ENCODE measurements at regions of chr3 and their contacts with region 1.

Region 1: GRCh38 chr3:66998113-66998903 is at the start of gene KBTBD8:
- DNase-seq: peak; percentile 97
- H3K4me3 Mint-ChIP-seq: peak within 1 kb of the TSS; percentile 95
- H3K27ac Mint-ChIP-seq: peak within 1 kb of the TSS; percentile 88
- H3K4me1 Mint-ChIP-seq: peaks cover 36% of the 10 kb centered on the region
- H3K27me3 Mint-ChIP-seq: peaks cover 10% of the 10 kb centered on the region
- total RNA-seq, gene KBTBD8: 18.3 and 26.6 TPM in 2 replicates

Region 2: DNA sequence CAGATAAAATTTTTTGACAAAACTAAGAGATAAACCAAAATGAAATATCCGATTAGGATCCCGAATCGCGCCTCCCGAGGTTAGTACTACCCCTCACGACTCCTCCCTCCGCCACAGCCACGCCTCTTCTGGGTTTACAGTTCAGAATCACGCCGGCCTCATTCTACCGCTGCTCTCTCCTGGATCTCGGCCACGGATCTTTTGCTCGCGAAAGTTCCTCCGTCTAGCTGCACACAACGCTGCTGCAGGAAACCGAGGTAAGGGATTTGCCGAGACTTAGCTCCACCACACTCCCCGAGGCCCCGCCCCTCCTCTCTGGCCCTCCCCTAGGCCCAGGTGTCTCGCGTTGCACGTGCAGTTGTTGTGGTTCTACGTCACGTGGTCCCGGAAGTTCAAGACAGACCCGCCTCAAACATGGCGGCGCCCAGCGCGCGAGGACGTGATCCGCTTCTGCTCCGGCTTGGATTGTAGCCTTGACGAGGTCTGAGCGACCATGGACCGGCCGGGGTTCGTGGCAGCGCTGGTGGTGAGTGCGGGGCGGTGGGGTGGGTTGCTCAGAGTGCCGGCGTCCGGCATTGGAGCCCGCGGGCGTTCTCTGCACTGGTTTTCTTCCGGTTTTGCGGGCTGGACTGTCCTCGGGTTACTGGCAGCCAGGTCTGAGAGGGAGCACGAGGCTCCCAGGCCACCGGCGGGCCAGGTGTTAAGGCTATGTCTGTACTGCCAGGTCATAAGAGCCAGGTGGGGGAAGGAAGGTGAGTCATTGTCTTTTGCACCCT is 777.5 kb before region 1 on chr3 and contains the start of gene SLC25A26:
- intact Hi-C with region 1: loop called (anchors 1 kb)
- DNase-seq: peak; percentile 97
- H3K4me3 Mint-ChIP-seq: peak within 1 kb of the TSS; percentile 98
- H3K27ac Mint-ChIP-seq: peak within 1 kb of the TSS; percentile 85
- H3K4me1 Mint-ChIP-seq: peaks cover 41% of the 10 kb centered on the region
- H3K27me3 Mint-ChIP-seq: peaks cover 2% of the 10 kb centered on the region
- total RNA-seq, gene SLC25A26: 17.0 and 18.8 TPM in 2 replicates

Region 3: GRCh38 chr3:66302288-66302687 is 696.0 kb before region 1 on chr3:
- intact Hi-C with region 1: loop called (anchors 1 kb)
- DNase-seq: peak; percentile 37
- H3K4me3 Mint-ChIP-seq: peak overlapping the region; percentile 32
- H3K27ac Mint-ChIP-seq: peak overlapping the region; percentile 91
- H3K4me1 Mint-ChIP-seq: peaks cover 65% of the 10 kb centered on the region
- H3K27me3 Mint-ChIP-seq: no peaks in the 10 kb centered on the region

Region 4: DNA sequence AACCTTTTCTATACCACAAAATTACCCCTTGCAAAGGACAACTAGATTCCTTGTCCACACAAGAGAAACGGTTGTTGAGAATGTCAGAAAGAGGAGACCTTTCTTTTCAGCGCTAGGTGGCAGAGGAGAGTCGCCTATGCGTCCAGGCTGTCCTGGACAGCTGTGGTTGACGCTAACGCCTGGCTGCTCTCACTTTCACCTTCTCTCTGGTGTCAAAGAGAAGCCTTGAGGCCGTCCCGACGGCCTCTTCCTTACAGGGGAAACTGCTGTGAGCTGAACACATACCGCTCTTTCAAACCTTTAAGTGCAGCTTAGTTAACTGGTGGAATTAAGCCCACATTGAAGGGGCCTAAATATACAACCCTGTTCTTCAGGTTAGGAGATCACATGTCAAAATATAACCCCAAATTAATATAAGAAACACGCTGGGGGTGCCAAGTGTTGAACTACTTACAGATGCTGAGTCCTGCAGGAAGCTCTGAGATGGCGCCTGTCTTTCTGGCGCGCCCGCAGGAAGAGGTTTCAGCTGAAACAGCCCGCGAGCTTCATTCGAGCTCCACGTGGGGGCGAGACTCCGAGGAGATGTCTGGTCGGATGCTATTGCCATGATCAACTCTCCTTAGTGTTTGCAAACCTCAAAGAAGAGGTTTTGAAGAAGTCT is 26.3 kb before region 1 on chr3:
- intact Hi-C with region 1: loop called (anchors 1 kb)
- DNase-seq: peak; percentile 46
- H3K4me3 Mint-ChIP-seq: peak overlapping the region; percentile 68
- H3K27ac Mint-ChIP-seq: no peak overlapping the region
- H3K4me1 Mint-ChIP-seq: peaks cover 13% of the 10 kb centered on the region
- H3K27me3 Mint-ChIP-seq: peaks cover 24% of the 10 kb centered on the region

Region 5: DNA sequence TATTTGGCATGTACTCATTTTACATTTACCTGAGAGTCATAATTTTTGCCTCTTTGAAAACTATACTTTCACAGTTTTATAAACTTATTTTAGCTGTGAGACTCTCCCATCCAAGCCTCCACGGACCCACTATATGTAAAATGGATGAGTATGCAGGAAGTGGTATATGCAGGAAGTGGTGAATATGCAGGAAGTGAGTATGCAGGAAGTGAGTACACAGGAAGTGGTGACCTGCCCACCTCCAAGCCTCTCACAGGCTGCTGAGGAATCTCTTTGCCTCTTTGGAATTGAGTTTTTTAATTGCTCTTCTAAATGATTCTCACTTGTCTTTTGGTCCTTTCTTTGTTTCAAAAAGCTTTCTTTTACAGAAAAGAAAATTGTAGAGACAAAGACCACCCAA is 85.0 kb after region 1 on chr3:
- intact Hi-C with region 1: loop called (anchors 2 kb)
- DNase-seq: peak; percentile 32
- H3K4me3 Mint-ChIP-seq: peak overlapping the region; percentile 52
- H3K27ac Mint-ChIP-seq: peak overlapping the region; percentile 76
- H3K4me1 Mint-ChIP-seq: peaks cover 16% of the 10 kb centered on the region
- H3K27me3 Mint-ChIP-seq: no peaks in the 10 kb centered on the region

Region 6: GRCh38 chr3:67349551-67350174 is 351.4 kb after region 1 on chr3:
- intact Hi-C with region 1: loop called (anchors 1 kb)
- DNase-seq: no peak
- H3K4me3 Mint-ChIP-seq: no peak overlapping the region
- H3K27ac Mint-ChIP-seq: peak overlapping the region; percentile 3
- H3K4me1 Mint-ChIP-seq: peaks cover 14% of the 10 kb centered on the region
- H3K27me3 Mint-ChIP-seq: peaks cover 3% of the 10 kb centered on the region

Region 7: DNA sequence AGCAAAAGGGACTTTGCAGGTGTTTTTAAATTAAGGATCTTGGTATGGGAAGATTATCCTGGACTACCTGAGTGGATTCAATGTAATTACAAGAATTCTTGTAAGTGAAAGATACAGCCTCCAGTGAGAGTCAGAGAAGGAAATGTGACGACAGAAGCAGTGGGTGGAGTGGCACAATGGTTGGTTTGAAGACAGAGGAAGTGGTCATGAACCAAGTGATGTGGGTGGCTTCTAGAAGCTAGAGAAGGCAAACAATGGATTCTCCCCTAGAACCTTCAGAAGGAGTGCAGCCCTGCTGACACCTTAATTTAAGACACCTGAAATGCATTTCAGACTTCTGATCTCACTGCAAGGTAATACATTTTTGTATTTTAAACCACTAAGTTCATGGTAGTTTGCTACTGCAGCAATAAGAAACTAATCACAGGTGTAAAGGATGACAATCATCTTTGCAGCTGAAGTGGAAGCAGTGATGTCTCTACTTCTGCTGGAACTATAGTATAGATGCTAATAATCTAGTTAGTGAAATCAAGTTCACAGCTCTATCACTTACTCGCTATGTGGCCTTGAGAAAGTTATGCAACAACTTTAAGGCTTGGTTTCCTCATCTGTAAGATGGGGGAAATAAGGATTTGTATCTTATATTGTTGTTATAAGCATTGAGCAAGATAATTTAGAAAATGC is 1059.5 kb after region 1 on chr3:
- intact Hi-C with region 1: loop called (anchors 1 kb)
- DNase-seq: peak; percentile 66
- H3K4me3 Mint-ChIP-seq: peak overlapping the region; percentile 54
- H3K27ac Mint-ChIP-seq: peak overlapping the region; percentile 76
- H3K4me1 Mint-ChIP-seq: peaks cover 59% of the 10 kb centered on the region
- H3K27me3 Mint-ChIP-seq: no peaks in the 10 kb centered on the region

Measured in activated T-helper 1 cell treated with anti-CD3 and anti-CD28 coated beads, Interleukin-12 subunit alpha, Interleukin-12 subunit beta, Interleukin-2, Interleukin-4 antibody, amounts not matched to agents 30 ng/mL and 10 ng/mL and 1 ng/mL, durations not matched to agents 14 hours and 24 hours and 36 hours (primary cell).